ENCODE measurements at regions of chr2 and their contacts with region 1.

Region 1: DNA sequence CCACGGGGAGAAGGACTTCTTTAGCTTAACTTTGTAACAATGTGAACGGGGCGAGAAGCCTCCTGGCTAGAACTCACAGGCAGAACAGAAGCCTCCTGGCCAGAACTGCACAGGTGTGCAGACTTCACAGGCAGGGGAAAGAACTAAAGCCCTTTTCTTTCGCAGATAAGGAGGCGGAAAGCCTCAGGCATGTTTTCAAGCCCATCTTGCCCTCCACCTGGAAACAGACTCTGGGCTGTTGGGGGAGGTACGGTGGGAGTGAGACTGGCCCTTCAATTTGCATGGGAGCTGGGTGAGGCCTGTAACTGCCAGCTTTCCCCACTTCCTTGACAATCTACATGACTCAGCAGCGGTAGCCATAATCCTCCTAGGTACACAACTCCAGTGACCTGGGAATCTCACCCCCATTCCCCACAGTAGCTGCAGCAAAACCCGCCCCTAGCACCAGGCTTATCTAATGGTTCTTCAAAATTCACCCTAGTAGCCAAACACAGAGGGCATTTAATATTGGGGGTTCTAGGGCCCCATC is 22.9 kb upstream of the ABCA12 start:
- DNase-seq: no peak
- ATAC-seq: no peak
- H3K4me3 Mint-ChIP-seq: no peak overlapping the region
- H3K27ac Mint-ChIP-seq: no peak overlapping the region
- H3K4me1 Mint-ChIP-seq: no peaks in the 10 kb centered on the region
- H3K27me3 Mint-ChIP-seq: peaks cover 3% of the 10 kb centered on the region

Region 2: DNA sequence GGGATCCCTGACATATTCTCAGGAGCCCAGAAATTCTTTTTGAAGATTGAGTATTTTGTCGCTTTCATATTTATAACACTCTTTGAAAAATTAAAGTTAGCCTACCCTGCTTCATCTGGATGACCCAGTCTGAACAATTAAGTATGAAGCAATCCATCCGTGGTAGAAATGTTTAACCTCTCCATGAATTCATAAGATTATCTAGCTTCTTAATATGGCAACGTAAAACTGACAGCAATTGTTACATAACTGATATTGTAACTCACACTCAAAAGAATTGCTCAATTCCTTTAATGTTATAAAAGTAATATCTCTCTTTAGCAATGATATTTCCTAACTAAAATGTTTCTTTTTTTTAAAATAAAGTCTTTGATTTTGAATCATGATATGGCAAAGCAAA is 15.8 kb before region 1 on chr2:
- CTCF ChIA-PET with region 1: no interaction called
- POLR2A ChIA-PET with region 1: no interaction called
- intact Hi-C with region 1: no loop called
- DNase-seq: no peak
- ATAC-seq: no peak
- H3K4me3 Mint-ChIP-seq: no peak overlapping the region
- H3K27ac Mint-ChIP-seq: no peak overlapping the region
- H3K4me1 Mint-ChIP-seq: no peaks in the 10 kb centered on the region
- H3K27me3 Mint-ChIP-seq: peaks cover 2% of the 10 kb centered on the region

Region 3: GRCh38 chr2:215188078-215188477 is 26.7 kb after region 1 on chr2:
- CTCF ChIA-PET with region 1: no interaction called
- POLR2A ChIA-PET with region 1: no interaction called
- intact Hi-C with region 1: no loop called
- DNase-seq: no peak
- ATAC-seq: no peak
- H3K4me3 Mint-ChIP-seq: no peak overlapping the region
- H3K27ac Mint-ChIP-seq: no peak overlapping the region
- H3K4me1 Mint-ChIP-seq: no peaks in the 10 kb centered on the region
- H3K27me3 Mint-ChIP-seq: peaks cover 13% of the 10 kb centered on the region

Region 4: DNA sequence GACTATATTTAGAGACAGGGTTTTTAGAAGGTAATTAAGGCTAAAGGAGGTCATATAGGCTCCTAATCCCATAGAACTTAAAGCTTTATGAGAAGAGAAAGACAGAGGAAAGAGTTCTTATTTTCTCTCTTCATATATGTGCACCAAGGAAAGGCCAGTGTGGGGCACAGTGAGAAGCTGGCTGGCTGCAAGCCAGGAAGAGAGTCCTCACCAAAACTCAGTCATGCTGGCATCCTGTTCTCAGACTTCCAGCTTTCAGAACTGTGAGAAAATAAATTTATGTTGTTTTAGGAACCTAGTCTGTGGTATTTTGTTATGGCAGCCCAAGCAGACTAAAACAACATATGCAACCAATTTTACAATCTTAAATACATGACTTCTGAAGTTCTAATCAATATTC is 119.0 kb after region 1 on chr2:
- CTCF ChIA-PET with region 1: no interaction called
- POLR2A ChIA-PET with region 1: interaction called, 10 read pairs
- intact Hi-C with region 1: no loop called
- DNase-seq: no peak
- ATAC-seq: no peak
- H3K4me3 Mint-ChIP-seq: no peak overlapping the region
- H3K27ac Mint-ChIP-seq: no peak overlapping the region
- H3K4me1 Mint-ChIP-seq: no peaks in the 10 kb centered on the region
- H3K27me3 Mint-ChIP-seq: peaks cover 2% of the 10 kb centered on the region